ENCODE measurements at regions of chr1 and their contacts with region 1.

Region 1: GRCh38 chr1:178031856-178032320 is 62.0 kb upstream of the RASAL2 start:
- DNase-seq: peak; percentile 86 to 87
- H3K4me3 ChIP-seq: no peak overlapping the region
- H3K27ac ChIP-seq: peak overlapping the region; percentile 46
- H3K4me1 ChIP-seq: peaks cover 20% of the 10 kb centered on the region
- H3K27me3 ChIP-seq: no peaks in the 10 kb centered on the region
- CTCF ChIP-seq: peak; percentile 91

Region 2: DNA sequence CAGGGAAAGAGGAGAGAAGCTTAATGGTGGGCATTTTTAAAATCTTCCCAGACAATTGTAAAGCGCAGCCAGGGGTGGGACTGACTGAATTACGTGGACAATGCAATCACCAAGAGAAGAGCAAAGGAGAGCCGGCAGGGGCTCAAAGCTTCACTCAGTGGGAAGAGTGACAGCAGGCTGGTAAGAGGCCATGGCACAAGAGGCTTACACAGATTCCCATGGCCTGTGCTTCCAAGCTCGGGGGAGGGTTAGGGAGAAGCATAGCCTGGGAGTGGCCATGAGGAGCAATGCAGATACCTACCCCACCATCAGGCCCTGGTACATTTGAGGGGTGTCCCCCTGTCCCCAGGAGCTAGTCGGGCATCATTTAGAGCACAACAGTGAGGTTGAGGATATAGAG is 34.9 kb before region 1 on chr1:
- CTCF ChIA-PET with region 1: no interaction called
- POLR2A ChIA-PET with region 1: no interaction called
- intact Hi-C with region 1: no loop called
- DNase-seq: no peak
- H3K4me3 ChIP-seq: no peak overlapping the region
- H3K27ac ChIP-seq: no peak overlapping the region
- H3K4me1 ChIP-seq: no peaks in the 10 kb centered on the region
- H3K27me3 ChIP-seq: no peaks in the 10 kb centered on the region; the same call in 1 of the 2 replicates
- CTCF ChIP-seq: no peak

Region 3: GRCh38 chr1:178060789-178061556 is 29.1 kb after region 1 on chr1:
- CTCF ChIA-PET with region 1: interaction called, 11 read pairs
- POLR2A ChIA-PET with region 1: no interaction called
- intact Hi-C with region 1: no loop called
- DNase-seq: peak; percentile 51 to 91
- H3K4me3 ChIP-seq: peak overlapping the region; percentile 36; the same call in 1 of the 2 replicates
- H3K27ac ChIP-seq: peak overlapping the region; percentile 87
- H3K4me1 ChIP-seq: peaks cover 39% of the 10 kb centered on the region
- H3K27me3 ChIP-seq: no peaks in the 10 kb centered on the region
- CTCF ChIP-seq: no peak

Region 4: DNA sequence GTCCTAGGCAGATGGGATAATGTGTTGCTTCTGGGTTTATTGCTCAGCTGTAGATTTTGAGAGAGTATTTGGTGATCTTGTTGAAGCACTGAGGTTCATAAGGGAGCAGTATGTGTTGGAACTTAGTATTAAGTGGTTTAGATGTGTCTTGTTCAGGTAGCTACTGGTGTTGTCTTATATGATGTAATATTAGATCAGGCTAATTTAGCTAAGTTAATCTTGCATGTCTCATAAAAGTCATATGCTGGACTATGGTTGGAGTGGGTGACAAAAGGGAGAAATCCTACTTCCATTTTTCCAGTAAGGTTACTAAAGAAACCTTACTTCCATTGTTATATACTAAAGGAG is 268.4 kb after region 1 on chr1:
- CTCF ChIA-PET with region 1: interaction called, 12 read pairs
- POLR2A ChIA-PET with region 1: no interaction called
- intact Hi-C with region 1: loop called (anchors 1 kb)
- DNase-seq: no peak
- H3K4me3 ChIP-seq: no peak overlapping the region
- H3K27ac ChIP-seq: no peak overlapping the region
- H3K4me1 ChIP-seq: peaks cover 9% of the 10 kb centered on the region; the same call in 1 of the 2 replicates
- H3K27me3 ChIP-seq: no peaks in the 10 kb centered on the region
- CTCF ChIP-seq: no peak

Measured in PC-9 (cell line).